PC-9 (cell line): ENCODE measurements at regions of chr12 and their contacts with region 1.

Region 1: DNA sequence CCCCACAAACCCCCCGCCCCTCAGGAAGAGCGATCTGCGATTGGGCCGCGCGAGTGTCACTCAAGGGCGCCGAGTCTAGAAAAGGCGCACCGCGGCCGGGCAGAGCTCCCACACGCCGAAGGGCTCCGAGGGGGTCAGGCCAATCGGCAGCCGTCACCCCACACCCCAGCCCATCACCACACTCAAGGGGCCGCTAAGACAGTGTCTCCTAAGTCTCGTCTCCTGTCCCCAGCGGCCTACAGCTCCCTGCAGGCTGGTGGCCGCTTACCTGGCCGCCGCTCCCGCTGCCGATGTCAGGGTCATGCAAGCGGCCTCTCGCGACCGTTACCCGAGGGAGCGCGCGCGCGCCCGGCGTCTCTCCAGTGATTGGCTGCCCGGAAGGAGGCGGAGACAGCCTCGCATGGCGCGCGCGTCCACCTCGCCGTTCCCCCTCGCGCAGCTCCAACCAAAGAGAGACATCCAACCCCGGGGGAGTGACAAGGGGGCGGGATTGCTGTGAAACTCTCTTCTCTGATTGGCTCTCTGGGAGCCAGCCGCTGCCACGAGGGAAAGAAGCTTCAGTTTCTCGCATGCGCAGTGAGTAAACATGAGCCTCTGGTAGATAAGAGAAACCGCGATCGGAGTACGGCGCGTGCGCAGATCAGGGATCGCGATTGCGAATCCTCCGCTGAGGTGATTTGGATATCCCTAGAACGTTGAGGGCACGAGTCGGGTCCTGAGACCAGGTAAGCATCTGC is at the starts of genes MPHOSPH9 and MTRFR:
- DNase-seq: peak; percentile 98
- H3K4me3 ChIP-seq: peak within 1 kb of the TSS; percentile 82
- H3K27ac ChIP-seq: peak within 1 kb of the TSS; percentile 32
- H3K4me1 ChIP-seq: peaks cover 23% of the 10 kb centered on the region
- H3K27me3 ChIP-seq: no peaks in the 10 kb centered on the region
- CTCF ChIP-seq: no peak
- total RNA-seq, gene MPHOSPH9: 46.9 and 58.5 TPM in 2 replicates
- total RNA-seq, gene MTRFR: 18.6 and 19.4 TPM in 2 replicates

Region 2: DNA sequence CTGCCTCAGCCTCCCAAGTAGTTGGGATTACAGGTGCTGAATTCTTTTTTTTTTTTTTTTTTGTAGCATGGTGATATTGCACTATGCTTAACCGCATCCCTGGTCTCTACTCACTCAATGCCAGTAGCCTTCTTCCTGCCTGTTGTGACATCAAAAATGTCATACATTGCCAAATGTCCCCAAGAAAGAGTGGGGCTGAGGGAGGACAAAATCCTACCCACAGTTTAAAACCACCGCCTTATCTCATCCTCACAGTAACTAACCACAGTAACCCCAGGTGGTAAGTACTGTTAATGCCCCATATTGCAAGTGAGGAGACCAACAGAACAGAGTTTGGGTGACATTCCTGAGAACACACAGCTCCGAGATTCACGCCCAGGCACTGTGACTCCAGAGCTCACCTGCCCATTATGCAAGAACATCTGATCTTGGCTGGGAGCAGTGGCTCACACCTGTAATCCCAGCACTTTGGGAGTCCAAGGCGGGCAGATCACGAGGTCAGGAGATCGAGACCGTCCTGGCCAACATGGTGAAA is 1583.1 kb before region 1 on chr12:
- CTCF ChIA-PET with region 1: no interaction called
- POLR2A ChIA-PET with region 1: interaction called, 30 read pairs
- intact Hi-C with region 1: no loop called
- DNase-seq: no peak
- H3K4me3 ChIP-seq: no peak overlapping the region
- H3K27ac ChIP-seq: no peak overlapping the region
- H3K4me1 ChIP-seq: no peaks in the 10 kb centered on the region
- H3K27me3 ChIP-seq: no peaks in the 10 kb centered on the region
- CTCF ChIP-seq: no peak

Region 3: GRCh38 chr12:122593910-122594309 is 639.1 kb before region 1 on chr12:
- CTCF ChIA-PET with region 1: no interaction called
- POLR2A ChIA-PET with region 1: no interaction called
- intact Hi-C with region 1: no loop called
- DNase-seq: no peak
- H3K4me3 ChIP-seq: no peak overlapping the region
- H3K27ac ChIP-seq: no peak overlapping the region
- H3K4me1 ChIP-seq: no peaks in the 10 kb centered on the region
- H3K27me3 ChIP-seq: no peaks in the 10 kb centered on the region
- CTCF ChIP-seq: no peak

Region 4: DNA sequence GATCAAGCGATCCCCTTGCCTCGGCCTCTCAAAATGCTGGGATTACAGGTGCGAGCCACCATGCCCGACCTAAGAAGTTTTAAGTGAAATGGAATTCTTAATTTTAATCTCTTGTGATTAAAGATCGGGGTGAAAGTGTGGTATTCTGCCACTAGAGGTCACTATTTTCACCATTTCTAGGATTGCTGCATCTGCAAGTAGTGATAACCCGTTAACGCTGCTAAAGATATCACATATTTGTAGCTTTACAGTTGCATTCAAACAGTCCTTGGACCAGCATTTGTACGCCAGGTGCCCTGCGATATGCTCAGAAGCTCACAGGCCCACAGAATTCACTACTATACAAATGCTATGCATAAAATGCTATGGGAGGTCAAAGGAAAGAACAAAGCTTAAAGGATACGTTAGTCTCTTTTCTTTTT is 439.3 kb before region 1 on chr12:
- CTCF ChIA-PET with region 1: no interaction called
- POLR2A ChIA-PET with region 1: no interaction called
- intact Hi-C with region 1: no loop called
- DNase-seq: peak in 1 of 2 experiments; percentile 6
- H3K4me3 ChIP-seq: no peak overlapping the region
- H3K27ac ChIP-seq: no peak overlapping the region
- H3K4me1 ChIP-seq: no peaks in the 10 kb centered on the region
- H3K27me3 ChIP-seq: no peaks in the 10 kb centered on the region
- CTCF ChIP-seq: peak; percentile 86

Region 5: DNA sequence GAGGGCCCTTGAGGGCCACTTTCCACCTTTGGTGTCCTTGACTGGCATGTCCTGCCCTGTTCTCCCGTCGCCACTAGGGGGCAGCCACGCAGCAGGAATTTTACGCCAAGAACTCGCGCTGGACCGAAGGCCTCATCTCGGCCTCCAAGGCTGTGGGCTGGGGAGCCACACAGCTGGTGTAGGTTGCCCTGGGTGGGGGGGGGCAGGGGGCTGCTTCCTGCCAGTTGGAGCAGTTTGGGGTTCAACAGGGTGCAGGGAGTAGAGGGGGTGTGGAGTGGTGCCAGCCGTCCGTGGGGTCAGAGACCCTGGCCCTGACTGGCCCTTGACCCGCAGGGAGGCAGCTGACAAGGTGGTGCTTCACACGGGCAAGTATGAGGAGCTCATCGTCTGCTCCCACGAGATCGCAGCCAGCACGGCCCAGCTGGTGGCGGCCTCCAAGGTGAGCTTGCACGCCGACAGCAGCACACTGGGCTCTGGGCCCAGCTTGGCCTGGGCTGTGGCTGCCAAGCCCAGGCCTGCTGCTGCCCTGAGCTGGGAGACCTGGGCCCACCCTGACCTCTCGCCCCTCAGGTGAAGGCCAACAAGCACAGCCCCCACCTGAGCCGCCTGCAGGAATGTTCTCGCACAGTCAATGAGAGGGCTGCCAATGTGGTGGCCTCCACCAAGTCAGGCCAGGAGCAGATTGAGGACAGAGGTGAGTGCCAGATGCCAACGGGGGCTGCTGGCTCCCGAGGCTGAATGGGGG is 372.5 kb before region 1 on chr12:
- CTCF ChIA-PET with region 1: no interaction called
- POLR2A ChIA-PET with region 1: no interaction called
- intact Hi-C with region 1: loop called (anchors 1 kb)
- DNase-seq: peak in 1 of 2 experiments; percentile 77
- H3K4me3 ChIP-seq: no peak overlapping the region
- H3K27ac ChIP-seq: no peak overlapping the region
- H3K4me1 ChIP-seq: no peaks in the 10 kb centered on the region
- H3K27me3 ChIP-seq: no peaks in the 10 kb centered on the region
- CTCF ChIP-seq: peak; percentile 93

Region 6: DNA sequence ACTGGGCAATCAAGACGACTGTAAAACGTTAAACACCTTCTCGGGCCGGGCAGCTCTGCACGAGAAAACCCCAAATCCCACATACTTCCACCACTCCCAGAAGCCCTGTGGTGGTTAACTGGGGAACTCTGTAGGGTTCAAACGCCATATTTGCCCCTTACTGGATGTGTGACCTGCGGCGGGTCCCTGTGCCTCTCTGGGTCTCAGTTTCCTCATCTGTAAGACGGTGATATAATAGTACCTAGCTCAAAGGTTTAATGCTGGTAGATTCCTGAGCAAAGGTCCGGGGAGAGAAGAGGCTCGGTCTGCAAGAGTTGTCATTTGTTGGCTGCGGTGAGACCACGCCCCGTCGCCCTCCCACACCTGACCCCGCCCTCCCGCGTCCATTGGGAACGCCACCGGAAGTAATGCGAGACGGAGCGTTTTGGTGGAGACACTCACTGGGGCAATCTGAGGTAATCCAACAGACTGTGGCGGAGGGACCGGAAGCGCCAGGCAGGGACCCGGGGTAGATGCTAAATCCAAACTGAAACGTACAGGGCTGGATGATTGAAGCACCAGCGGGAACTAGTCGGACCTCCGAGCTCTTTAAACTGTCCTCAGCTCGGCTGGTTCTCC is 258.6 kb before region 1 on chr12:
- CTCF ChIA-PET with region 1: interaction called, 5 read pairs
- POLR2A ChIA-PET with region 1: interaction called, 6 read pairs
- intact Hi-C with region 1: loop called (anchors 2 kb)
- DNase-seq: peak; percentile 90 to 98
- H3K4me3 ChIP-seq: peak overlapping the region; percentile 94
- H3K27ac ChIP-seq: peak overlapping the region; percentile 77
- H3K4me1 ChIP-seq: peaks cover 9% of the 10 kb centered on the region; the same call in 1 of the 2 replicates
- H3K27me3 ChIP-seq: no peaks in the 10 kb centered on the region
- CTCF ChIP-seq: no peak

Region 7: DNA sequence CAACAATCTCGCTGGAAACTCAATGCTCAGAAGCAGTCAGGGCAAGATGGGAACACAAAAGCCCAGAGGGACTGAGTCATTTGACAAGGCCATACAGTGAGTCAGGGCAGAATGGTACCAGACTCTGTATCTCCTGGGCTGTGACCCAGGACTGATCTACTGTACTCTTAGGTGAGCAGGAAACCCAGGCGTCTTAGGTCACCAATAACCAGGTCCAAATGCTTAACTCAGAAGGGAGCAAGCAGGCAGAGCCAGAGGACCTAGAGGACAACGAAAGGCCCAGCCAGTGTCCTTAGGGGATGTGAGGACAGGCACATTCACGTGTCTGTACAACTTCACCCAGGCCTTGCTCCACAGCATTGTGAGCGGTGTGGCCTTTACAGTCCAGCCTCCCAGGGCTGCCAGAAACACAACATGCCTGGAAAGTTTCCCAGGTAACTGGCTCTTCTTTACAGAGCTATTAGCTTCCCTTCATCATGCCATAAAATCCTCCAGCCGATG is 182.6 kb before region 1 on chr12:
- CTCF ChIA-PET with region 1: no interaction called
- POLR2A ChIA-PET with region 1: interaction called, 24 read pairs
- intact Hi-C with region 1: no loop called
- DNase-seq: no peak
- H3K4me3 ChIP-seq: no peak overlapping the region
- H3K27ac ChIP-seq: no peak overlapping the region
- H3K4me1 ChIP-seq: peaks cover 4% of the 10 kb centered on the region
- H3K27me3 ChIP-seq: no peaks in the 10 kb centered on the region
- CTCF ChIP-seq: no peak

Region 8: DNA sequence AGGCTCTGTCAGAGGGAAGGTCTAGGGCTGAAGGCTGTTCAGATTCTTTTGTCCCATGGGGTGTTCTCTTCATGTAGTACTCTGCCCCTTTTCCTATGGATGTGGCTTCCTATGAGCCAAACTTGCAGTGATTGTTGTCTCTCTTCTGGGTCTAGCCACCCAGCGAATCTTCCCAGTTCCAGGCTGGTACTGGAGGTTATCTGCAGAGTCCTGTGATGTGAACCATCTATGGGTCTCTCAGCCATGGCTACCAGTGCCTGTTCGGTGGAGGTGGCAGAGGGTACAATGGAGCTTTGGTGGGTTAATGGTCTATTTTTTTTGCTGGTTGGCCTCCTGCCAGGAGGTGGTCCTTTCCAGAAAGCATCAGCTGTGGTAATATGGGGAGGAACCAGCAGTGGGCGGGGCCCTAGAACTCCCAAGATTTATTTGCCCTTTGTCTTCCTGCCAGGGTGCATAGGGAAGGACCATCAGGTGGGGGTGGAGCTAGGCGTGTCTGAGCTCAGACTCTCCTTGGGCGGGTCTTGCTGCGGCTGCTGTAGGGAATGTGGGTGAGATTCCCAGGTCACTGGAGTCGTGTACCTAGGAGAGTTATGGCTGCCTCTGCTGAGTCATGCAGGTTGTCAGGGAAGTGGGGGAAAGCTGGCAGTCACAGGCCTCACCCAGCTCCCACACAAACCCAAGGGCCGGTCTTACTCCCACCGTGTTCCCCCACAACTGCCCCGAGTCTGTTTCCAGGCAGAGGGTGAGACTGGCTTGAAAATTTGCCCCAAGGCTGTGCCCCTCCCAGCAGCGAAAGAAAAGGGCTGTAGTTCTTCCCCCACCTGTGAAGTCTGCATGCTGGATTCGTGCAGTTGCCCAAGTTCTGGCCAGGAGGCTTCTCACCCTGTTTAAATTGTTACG is 17.8 kb after region 1 on chr12:
- CTCF ChIA-PET with region 1: no interaction called
- POLR2A ChIA-PET with region 1: interaction called, 13 read pairs
- intact Hi-C with region 1: no loop called
- DNase-seq: peak; percentile 93 to 94
- H3K4me3 ChIP-seq: peak overlapping the region; percentile 37; the same call in 1 of the 2 replicates
- H3K27ac ChIP-seq: peak overlapping the region; percentile 94
- H3K4me1 ChIP-seq: peaks cover 33% of the 10 kb centered on the region
- H3K27me3 ChIP-seq: no peaks in the 10 kb centered on the region
- CTCF ChIP-seq: no peak

Region 9: DNA sequence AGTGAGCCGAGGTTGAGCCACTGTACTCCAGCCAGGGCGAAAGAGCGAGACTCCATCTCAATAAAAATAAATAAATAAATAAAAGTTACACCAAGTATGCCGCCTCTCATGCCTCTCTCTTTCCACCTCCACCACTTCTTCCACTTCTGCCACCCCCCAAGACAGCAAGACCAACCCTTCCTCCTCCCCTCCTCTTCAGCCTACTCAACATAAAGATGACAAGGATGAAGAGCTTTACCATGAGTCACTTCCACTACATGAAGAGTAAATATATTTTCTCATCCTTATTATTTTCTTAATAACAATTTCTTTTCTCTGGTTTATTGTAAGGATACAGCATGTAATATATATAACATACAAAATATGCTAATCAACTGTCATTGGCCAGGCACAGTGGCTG is 347.8 kb after region 1 on chr12:
- CTCF ChIA-PET with region 1: no interaction called
- POLR2A ChIA-PET with region 1: interaction called, 10 read pairs
- intact Hi-C with region 1: no loop called
- DNase-seq: no peak
- H3K4me3 ChIP-seq: no peak overlapping the region
- H3K27ac ChIP-seq: no peak overlapping the region
- H3K4me1 ChIP-seq: peaks cover 12% of the 10 kb centered on the region
- H3K27me3 ChIP-seq: no peaks in the 10 kb centered on the region
- CTCF ChIP-seq: no peak

Region 10: DNA sequence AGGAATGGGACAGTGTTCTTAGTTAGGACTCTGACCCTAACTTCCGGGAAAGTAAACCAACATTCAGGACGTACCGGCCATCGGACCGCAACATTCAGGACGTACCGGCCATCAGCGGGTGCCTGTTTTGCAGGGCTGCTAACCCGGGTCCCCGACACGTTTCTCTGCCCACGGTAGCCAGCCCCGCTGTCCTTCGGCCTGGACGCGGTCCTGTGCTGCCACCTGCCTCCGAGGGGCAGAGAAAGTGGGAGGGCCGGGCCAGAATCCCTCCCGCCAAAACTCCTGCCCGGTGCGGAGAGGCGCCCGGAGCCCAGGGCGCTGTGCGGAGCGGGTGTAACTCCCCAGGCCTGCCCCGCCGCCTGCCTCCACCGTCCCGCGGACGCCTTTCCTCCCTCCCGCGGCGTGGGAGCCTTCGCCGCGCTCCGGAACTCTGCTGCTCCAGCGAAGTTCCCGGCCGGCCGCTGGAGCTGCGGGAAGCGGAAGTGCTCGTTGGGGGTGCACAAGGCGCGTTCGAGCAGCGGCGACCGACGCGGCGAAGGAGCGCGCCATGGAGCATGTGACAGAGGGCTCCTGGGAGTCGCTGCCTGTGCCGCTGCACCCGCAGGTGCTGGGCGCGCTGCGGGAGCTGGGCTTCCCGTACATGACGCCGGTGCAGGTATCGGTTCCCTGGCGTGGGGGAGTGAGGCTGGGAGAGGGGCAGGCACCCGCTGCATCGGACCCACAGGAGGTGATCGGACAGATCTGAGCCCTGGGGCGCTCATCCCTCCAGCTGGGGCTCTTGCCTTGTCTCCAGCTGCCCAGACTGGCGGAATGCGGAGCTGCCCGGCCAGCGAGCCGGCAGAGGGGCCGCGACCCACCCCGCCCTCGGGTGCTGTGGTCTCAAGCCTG is 368.9 kb after region 1 on chr12 and contains the start of gene DDX55:
- CTCF ChIA-PET with region 1: no interaction called
- POLR2A ChIA-PET with region 1: no interaction called
- intact Hi-C with region 1: no loop called
- DNase-seq: peak; percentile 63 to 79
- H3K4me3 ChIP-seq: peak within 1 kb of the TSS; percentile 97
- H3K27ac ChIP-seq: peak within 1 kb of the TSS; percentile 45
- H3K4me1 ChIP-seq: 0 out of 2 replicates have a peak, but pooled peaks cover 5% of the 10 kb centered on the region
- H3K27me3 ChIP-seq: no peaks in the 10 kb centered on the region
- CTCF ChIP-seq: peak; percentile 61
- total RNA-seq, gene DDX55: 17.5 and 19.5 TPM in 2 replicates